ENCODE measurements at regions of chr12 and their contacts with region 1.

Region 1: GRCh38 chr12:7995266-7995963 is 37.1 kb upstream of the FOXJ2 start:
- ATAC-seq: peak; percentile 97 to 100 (median 100)
- H3K4me3 ChIP-seq: no peak overlapping the region
- H3K27ac ChIP-seq: no peak overlapping the region
- H3K4me1 ChIP-seq: no peaks in the 10 kb centered on the region

Region 2: GRCh38 chr12:7859552-7859951 is 135.9 kb before region 1 on chr12:
- in situ Hi-C with region 1: loop called in 7 of 9 experiments (anchors 10 to 25 kb)
- ATAC-seq: peak in 2 of 8 experiments; percentile 5 to 13
- H3K4me3 ChIP-seq: no peak overlapping the region
- H3K27ac ChIP-seq: no peak overlapping the region
- H3K4me1 ChIP-seq: no peaks in the 10 kb centered on the region

Region 3: DNA sequence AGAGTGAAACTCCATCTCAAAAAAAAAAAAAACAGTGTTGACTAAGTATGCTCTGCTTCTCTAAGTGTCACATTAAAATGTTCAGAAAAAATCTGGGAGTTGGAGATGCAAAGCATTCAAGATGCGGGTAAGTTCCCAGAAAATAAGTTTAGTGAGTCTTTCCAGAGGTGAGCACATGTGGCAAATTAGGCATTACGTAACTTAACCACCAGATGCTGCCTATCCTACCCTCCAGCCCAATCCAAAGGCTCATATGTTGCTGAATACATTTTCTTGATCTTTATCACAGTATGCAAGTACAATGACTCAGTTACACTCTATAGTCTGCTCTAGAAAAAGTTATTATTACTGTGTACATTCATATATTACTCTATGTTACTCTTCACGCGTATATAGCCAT is 126.3 kb before region 1 on chr12:
- in situ Hi-C with region 1: loop called in 5 of 9 experiments (anchors 10 to 25 kb)
- ATAC-seq: peak in 3 of 8 experiments; percentile 79 to 95 (median 91)
- H3K4me3 ChIP-seq: no peak overlapping the region
- H3K27ac ChIP-seq: no peak overlapping the region
- H3K4me1 ChIP-seq: no peaks in the 10 kb centered on the region